ENCODE measurements at regions of chr20 and their contacts with region 1.

Region 1: DNA sequence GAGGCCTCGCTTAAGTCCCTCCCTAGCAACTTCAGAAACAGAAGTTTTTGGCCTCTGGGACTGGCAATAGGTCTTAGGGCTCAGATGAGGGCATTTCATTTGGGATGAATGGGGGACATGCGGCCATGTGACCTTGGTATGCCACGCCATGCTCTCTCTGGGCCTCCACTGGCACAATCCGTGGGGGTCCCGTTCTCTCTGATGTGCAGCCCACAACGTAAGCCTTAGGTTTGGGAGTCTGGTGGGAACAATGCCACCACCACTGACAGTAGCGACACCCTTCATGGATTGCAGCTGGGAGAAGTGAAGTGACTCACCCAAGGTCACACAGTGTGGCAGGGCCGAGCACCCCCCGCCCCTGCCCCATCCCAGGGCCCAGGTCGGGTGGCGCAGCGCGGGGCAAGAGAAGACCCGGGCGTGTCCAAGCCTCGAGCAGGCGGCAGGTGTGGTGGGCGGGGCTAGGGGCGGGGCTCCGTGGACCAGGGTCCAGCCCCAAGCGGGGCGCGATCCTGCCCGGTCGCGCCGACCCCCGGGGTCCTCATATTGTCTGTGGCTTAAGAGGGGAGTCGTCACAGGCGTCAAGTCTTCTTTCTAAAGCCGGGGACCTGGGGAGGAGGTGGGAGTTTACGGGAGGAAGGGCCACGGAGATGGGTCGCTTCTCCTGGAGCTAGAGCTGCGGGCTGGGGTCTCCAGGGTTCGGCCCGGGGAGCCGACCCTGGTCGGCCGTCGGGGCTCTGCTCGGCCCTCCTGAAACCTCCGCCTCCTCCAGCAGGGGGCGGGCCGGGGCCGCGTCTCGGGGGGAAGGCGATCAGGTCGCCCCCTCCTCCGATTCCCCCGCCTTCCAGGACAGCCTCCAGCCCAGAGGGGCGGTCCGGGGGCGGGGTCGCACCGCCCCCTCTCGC is 698 bp upstream of the CEBPB start:
- DNase-seq: peak; percentile 93 to 95 (median 94)
- H3K4me3 ChIP-seq: peak overlapping the region in 2 of 4 donors; percentile 69 to 99
- H3K27ac ChIP-seq: peak overlapping the region; percentile 69 to 100 (median 99)
- H3K4me1 ChIP-seq: peaks cover 20 to 26% of the 10 kb centered on the region in 2 donors
- H3K27me3 ChIP-seq: no peaks in the 10 kb centered on the region
- CTCF ChIP-seq: peak; percentile 67 to 90 (median 79)
- POLR2A ChIP-seq: peak in 1 of 2 donors; percentile 36

Region 2: GRCh38 chr20:50278674-50279531 is 89.0 kb after region 1 on chr20:
- intact Hi-C with region 1: loop called (anchors 5 to 10 kb)
- DNase-seq: peak; percentile 84 to 97 (median 97)
- H3K4me3 ChIP-seq: no peak overlapping the region
- H3K27ac ChIP-seq: peak overlapping the region; percentile 45 to 93 (median 79)
- H3K4me1 ChIP-seq: peaks cover 15 to 52% of the 10 kb centered on the region in 2 donors
- H3K27me3 ChIP-seq: no peaks in the 10 kb centered on the region
- CTCF ChIP-seq: peak; percentile 26 to 76 (median 70)
- POLR2A ChIP-seq: peak in 1 of 2 donors; percentile 68

Region 3: DNA sequence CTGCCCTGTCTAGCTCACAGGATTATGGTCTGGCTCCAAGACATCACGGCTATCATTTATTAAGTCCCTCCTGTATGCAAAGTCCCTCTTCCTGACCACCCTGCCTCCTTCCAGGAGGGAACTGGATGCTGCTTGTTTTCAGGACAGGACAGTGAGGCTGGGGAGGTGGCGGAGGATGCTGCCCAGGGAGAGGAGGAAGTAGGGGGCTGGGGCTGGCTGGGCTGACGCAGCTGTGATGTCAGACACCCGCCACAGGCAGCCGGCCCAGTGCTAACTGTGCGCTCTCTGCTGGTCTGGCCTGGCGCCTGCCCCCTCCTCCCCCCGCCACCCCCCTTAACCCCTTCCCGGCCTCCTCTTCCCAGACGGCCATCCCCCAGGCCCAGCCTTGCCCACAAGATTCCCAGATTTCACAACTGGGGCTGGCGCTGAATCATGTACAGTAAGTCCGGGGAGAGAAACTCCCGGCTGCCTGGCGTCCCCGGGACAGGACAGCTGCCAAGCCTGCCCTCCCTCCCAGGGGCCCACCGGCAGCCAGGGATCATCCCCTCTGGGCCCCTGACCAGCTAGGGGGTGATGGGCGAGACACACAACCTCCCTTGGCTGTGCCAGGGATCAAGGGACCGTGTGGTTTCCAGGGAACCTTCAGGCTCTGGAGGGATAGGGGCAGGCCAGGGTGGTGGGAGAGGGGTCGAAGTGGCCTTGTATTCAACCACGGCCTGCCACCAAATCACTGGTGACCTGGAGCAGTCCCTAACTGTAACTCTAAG is 118.8 kb after region 1 on chr20:
- intact Hi-C with region 1: loop called in 1 of 2 experiments (anchors 5 kb)
- DNase-seq: peak; percentile 89 to 98 (median 97)
- H3K4me3 ChIP-seq: peak overlapping the region in 1 of 4 donors; percentile 7
- H3K27ac ChIP-seq: peak overlapping the region; percentile 89 to 98 (median 97)
- H3K4me1 ChIP-seq: peaks cover 49 to 59% of the 10 kb centered on the region in 2 donors
- H3K27me3 ChIP-seq: no peaks in the 10 kb centered on the region
- CTCF ChIP-seq: peak in 2 of 6 experiments; percentile 14 to 23
- POLR2A ChIP-seq: peak; percentile 45 to 51

Region 4: DNA sequence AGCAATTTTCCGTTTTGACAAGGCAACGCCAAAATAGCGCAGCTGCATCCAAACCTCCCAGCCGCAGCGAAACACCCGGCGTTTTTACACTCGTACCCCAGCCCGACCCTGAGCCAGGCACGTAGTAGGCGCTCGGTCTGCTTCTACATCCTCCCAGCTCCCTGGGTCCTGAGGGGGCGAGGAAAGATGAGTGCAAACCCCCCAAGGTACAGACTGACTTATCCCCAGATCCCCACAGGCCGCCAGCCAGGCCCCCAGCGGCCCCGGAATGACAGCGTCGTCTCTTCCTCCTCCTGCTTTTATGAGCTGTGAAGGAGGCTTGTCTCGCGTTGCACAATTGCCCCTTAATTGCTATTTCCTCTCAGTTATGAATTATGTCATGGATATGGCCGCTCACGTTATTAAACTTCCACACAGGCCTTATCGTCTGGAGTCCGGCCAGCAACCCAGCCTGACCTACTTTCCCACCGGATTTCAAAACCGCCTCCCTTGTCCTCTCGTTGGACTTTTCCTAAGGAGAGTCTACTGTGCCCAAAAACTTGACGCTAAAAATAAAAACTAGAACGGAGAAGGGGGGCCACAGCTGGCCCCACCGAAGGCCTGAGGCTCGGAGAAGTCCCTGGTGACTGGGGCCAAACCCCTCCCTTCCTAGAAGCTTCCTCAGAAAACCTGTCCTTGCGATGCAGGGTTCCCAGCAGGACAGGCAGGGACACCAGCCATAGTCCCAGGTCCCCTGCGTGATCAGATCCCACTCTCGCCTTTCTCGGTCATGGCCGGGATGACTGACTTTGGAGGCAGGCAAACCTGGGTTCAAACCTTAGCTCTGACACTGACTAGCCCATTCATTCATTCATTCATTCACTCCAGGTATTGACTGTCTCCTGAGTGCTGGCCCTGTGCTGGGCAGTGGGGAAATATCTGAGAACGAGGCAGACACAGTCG is 189.4 kb after region 1 on chr20:
- intact Hi-C with region 1: no loop called
- DNase-seq: peak; percentile 92 to 99 (median 97)
- H3K4me3 ChIP-seq: peak overlapping the region in 1 of 4 donors; percentile 2
- H3K27ac ChIP-seq: peak overlapping the region; percentile 71 to 96 (median 86)
- H3K4me1 ChIP-seq: peaks cover 43 to 45% of the 10 kb centered on the region in 2 donors
- H3K27me3 ChIP-seq: no peaks in the 10 kb centered on the region
- CTCF ChIP-seq: peak in 1 of 6 experiments; percentile 18
- POLR2A ChIP-seq: peak; percentile 82 to 87

Region 5: DNA sequence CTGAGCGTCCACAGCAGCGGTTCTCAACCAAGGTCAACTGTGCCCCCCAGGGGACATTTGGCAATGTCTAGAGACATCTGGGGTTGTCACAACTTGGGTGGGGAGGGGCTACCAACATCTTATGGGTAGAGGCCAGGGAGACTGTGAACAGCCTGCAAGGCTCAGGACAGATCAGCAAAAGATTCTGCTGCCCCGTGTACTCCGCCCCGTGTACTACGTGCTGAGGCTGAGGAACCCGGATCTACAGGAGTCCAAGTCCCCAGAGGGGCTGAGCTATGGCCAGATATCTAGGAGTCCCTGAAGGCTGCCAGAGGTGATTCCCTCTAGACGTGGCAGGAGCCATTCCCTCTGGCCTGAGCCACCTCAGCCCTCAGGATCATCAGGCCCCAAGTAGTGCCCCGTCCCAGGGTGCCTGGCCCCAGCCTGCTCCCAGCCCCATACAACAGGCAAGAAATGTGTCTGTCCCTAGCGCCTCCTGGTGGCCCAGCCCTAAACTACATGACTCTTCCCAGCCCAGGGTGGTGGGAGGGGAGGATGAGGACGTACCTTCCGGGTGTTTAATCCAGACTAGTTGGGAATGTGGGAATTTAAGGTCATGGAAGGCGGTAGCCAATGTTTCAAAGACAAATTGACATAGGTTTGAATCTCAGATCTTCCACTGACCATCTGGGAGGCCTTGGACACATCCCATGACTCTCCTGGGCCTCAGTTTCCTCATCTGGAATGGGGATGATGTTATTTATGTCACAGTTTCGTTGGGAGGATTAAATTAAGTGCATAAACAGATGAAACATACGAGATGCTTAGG is 270.7 kb after region 1 on chr20:
- intact Hi-C with region 1: loop called (anchors 2 to 5 kb)
- DNase-seq: peak; percentile 87 to 97 (median 92)
- H3K4me3 ChIP-seq: no peak overlapping the region
- H3K27ac ChIP-seq: peak overlapping the region in 4 of 5 donors; percentile 28 to 87 (median 43)
- H3K4me1 ChIP-seq: peaks cover 12 to 18% of the 10 kb centered on the region in 2 donors
- H3K27me3 ChIP-seq: no peaks in the 10 kb centered on the region
- CTCF ChIP-seq: peak; percentile 92 to 99 (median 98)
- POLR2A ChIP-seq: no peak

Region 6: DNA sequence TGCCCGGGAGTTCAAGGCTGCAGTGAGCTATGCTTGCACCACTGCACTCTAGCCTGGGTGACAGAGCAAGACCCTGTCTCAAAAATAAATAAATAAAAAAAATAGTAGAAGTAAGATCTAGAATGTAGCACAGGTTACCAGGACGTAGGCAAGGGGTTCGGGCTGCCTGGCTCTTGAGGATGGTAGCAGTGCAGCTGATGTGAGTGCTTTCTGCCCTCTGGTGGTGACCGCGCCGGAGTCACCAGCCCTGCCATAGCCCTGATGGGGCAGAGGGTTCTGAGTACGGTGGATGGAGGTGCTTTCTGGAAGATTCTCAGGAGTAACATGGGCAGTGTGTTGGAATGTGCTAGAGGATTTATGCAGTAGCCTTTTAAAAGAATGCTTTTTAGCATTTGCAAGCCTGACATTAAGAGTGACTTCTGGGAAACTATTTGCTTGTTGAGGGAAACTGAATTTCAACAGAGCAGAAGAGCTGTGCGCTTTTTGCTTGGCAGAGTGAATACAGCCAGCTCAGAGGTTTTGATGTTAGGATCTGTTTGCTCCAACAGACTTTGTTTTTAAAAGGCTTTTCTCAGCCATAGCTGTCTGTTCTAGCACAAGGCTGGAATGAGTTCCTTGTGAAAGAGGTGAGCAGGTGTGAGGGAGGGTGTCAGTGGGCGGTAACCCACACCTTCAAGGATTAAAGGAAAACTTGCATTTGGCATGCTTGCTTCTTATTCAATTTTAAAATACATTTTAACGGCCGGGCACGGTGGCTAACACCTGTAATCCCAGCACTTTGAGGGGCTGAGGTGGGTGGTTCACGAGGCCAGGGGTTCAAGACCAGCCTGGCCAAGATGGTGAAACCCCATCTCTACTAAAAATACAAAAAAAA is 386.2 kb after region 1 on chr20:
- intact Hi-C with region 1: loop called (anchors 5 kb)
- DNase-seq: peak; percentile 75 to 90 (median 85)
- H3K4me3 ChIP-seq: no peak overlapping the region
- H3K27ac ChIP-seq: peak overlapping the region in 3 of 5 donors; percentile 11 to 48 (median 32)
- H3K4me1 ChIP-seq: peaks cover 22% of the 10 kb centered on the region in 2 donors
- H3K27me3 ChIP-seq: no peaks in the 10 kb centered on the region
- CTCF ChIP-seq: peak; percentile 58 to 83 (median 74)
- POLR2A ChIP-seq: no peak

Region 7: GRCh38 chr20:50758469-50758868 is 568.5 kb after region 1 on chr20:
- intact Hi-C with region 1: loop called in 1 of 2 experiments (anchors 10 kb)
- DNase-seq: no peak
- H3K4me3 ChIP-seq: no peak overlapping the region
- H3K27ac ChIP-seq: no peak overlapping the region
- H3K4me1 ChIP-seq: peaks cover 6 to 9% of the 10 kb centered on the region in 2 donors
- H3K27me3 ChIP-seq: no peaks in the 10 kb centered on the region
- CTCF ChIP-seq: no peak
- POLR2A ChIP-seq: no peak

Measured in adrenal gland (tissue), 19 donors.